CD14-positive monocyte (primary cell): ENCODE measurements at regions of chr12 and their contacts with region 1.

Region 1: GRCh38 chr12:29155079-29155478 is 6.0 kb downstream of the FAR2 start:
- DNase-seq: no peak
- H3K4me3 ChIP-seq: no peak overlapping the region
- H3K4me3 Mint-ChIP-seq: no peak overlapping the region
- H3K27ac ChIP-seq: peak overlapping the region in 1 of 2 donors; percentile 45
- H3K27ac Mint-ChIP-seq: peak overlapping the region in 3 of 7 donors; percentile 15 to 55 (median 45)
- H3K4me1 ChIP-seq: peaks cover 83 to 89% of the 10 kb centered on the region in 2 donors
- H3K4me1 Mint-ChIP-seq: peaks cover 80% of the 10 kb centered on the region
- H3K27me3 ChIP-seq: no peaks in the 10 kb centered on the region
- H3K27me3 Mint-ChIP-seq: peaks cover 0 to 1% (median under 1%) of the 10 kb centered on the region in 3 donors
- CTCF ChIP-seq: no peak

Region 2: DNA sequence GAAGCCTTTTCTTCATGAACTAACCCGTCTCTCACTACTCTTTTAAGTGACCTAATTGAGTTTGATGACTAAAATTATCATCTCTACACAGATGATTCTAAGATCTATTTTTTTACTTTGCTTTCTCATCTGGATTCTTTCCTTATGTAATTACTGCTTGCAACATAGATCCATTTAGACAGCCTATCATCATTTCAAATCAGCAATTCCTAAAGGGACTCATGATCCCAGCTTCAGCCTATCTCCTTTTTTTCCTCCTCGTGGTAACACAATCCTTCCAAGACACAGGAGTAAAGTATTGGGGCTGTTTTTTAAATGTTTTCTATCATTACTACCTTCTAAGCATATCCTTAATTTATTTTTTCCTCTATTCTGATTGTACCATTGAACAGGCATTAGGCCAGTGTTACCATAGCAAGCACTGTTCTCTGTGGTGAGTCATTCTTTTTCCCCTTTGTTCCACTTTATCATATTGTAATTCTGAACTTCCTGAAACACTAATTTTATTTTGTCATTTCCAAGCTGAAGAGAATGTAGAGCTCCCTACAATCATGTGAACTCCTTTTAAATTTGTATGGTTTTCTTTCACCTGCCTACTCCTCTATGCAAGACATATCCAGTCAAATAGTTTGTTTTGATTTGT is 196.4 kb before region 1 on chr12:
- intact Hi-C with region 1: no loop called
- DNase-seq: no peak
- H3K4me3 ChIP-seq: no peak overlapping the region
- H3K4me3 Mint-ChIP-seq: no peak overlapping the region
- H3K27ac ChIP-seq: no peak overlapping the region
- H3K27ac Mint-ChIP-seq: no peak overlapping the region
- H3K4me1 ChIP-seq: no peaks in the 10 kb centered on the region
- H3K4me1 Mint-ChIP-seq: no peaks in the 10 kb centered on the region
- H3K27me3 ChIP-seq: no peaks in the 10 kb centered on the region
- H3K27me3 Mint-ChIP-seq: peaks cover 0 to 1% (median 0%) of the 10 kb centered on the region in 3 donors
- CTCF ChIP-seq: no peak

Region 3: DNA sequence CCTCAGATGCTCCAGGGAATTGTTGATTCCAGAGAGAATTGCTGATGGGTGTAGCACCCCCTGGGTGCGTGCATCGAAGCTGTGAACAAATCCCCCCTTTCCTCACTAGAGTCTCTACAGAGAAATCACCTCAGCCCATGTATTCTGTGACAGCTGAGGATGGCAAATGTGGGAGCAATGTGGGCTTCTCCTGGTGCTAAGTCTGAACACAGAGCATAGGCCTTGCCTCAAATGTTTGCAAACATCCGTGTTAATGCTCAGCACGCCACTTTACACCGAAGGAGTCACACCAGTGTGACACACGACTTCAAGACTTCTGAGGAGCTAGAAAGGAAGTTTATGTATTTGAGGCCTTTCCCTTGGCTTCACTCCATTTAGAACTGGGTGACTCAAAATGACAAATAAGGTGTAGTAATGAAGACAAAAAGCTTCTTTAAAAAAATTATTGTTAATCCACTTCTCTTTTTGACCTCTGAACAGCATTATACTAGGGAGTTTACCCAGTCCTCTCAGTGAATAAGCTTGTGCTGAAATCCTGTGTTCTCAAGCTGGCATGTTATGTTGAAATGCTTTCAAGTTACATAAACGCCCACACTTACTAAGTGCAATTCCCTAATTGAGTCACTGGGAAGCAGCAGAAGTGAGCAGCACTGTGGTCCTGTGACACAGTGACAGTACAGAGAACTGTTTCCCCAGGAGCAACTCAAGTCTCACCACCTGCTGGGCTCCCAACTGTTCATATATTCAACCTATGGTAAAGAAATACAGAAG is 86.9 kb after region 1 on chr12:
- intact Hi-C with region 1: loop called (anchors 5 to 10 kb)
- DNase-seq: peak; percentile 93 to 99 (median 95)
- H3K4me3 ChIP-seq: peak overlapping the region in 1 of 3 experiments; percentile 19
- H3K4me3 Mint-ChIP-seq: peak overlapping the region; percentile 15 to 34
- H3K27ac ChIP-seq: peak overlapping the region; percentile 95 to 100
- H3K27ac Mint-ChIP-seq: peak overlapping the region; percentile 97 to 100 (median 99)
- H3K4me1 ChIP-seq: peaks cover 30 to 38% of the 10 kb centered on the region in 2 donors
- H3K4me1 Mint-ChIP-seq: peaks cover 39% of the 10 kb centered on the region
- H3K27me3 ChIP-seq: no peaks in the 10 kb centered on the region
- H3K27me3 Mint-ChIP-seq: peaks cover 0 to 1% (median 0%) of the 10 kb centered on the region in 3 donors
- CTCF ChIP-seq: peak; percentile 25

Region 4: GRCh38 chr12:29299633-29300032 is 144.6 kb after region 1 on chr12:
- intact Hi-C with region 1: no loop called
- DNase-seq: no peak
- H3K4me3 ChIP-seq: no peak overlapping the region
- H3K4me3 Mint-ChIP-seq: no peak overlapping the region
- H3K27ac ChIP-seq: no peak overlapping the region
- H3K27ac Mint-ChIP-seq: no peak overlapping the region
- H3K4me1 ChIP-seq: no peaks in the 10 kb centered on the region
- H3K4me1 Mint-ChIP-seq: peaks cover 4% of the 10 kb centered on the region
- H3K27me3 ChIP-seq: no peaks in the 10 kb centered on the region
- H3K27me3 Mint-ChIP-seq: no peaks in the 10 kb centered on the region
- CTCF ChIP-seq: no peak